ENCODE measurements at regions of chr1 and their contacts with region 1.

Region 1: GRCh38 chr1:21478974-21479373 is 30.2 kb upstream of the ALPL start:
- DNase-seq: no peak
- H3K4me3 ChIP-seq: no peak overlapping the region
- H3K27ac ChIP-seq: no peak overlapping the region
- H3K4me1 ChIP-seq: no peaks in the 10 kb centered on the region
- H3K27me3 ChIP-seq: no peaks in the 10 kb centered on the region
- CTCF ChIP-seq: no peak

Region 2: DNA sequence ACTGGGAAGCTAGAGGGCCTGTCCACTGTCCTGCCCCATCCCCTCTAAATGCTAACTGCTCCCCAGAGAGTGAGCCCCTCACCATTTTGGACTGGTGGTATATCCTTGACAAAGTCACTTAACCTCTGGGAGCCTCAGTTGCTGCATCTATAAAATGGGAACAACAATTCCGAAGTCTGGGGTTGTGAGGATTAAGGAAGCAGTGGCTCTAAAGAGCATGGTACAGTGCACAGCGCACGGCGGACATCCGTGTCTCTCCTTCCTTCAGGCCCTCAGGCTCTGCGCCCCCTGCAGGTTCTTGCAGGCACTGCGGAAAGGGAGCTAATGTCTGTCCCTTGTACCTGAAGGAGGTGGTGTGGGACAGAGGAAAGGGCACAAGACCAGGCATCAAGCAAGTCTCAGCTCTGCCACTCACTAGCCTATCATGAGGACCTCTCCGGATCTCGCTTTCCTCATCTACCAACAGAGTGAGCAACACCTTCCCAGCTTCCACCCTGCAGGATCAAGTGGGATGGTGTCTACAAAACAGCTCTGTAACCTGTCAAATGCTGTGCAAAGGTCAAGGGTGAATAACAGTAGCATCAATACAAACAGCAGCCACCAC is 208.8 kb before region 1 on chr1:
- CTCF ChIA-PET with region 1: no interaction called
- POLR2A ChIA-PET with region 1: no interaction called
- intact Hi-C with region 1: no loop called
- DNase-seq: peak; percentile 75
- H3K4me3 ChIP-seq: no peak overlapping the region
- H3K27ac ChIP-seq: no peak overlapping the region
- H3K4me1 ChIP-seq: no peaks in the 10 kb centered on the region
- H3K27me3 ChIP-seq: no peaks in the 10 kb centered on the region
- CTCF ChIP-seq: peak; percentile 98

Region 3: DNA sequence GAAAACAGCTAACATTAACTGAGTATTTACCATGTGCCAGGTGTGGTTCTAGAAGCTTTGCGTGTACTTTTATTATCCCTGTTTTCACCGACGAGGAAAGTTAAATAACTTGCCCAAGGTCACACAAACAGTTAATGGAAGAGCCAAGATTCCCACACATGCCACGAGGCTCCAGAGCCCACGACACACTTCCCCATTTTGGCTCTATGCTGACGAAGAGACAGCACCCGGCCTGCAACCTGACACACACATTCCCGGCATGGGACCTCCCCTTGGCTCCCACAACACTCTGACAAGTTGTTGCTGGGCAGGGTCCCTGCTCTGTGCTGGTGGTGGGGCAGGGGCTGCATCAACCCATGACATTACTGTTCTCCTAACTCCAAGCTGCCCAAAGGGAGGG is 137.4 kb after region 1 on chr1:
- CTCF ChIA-PET with region 1: no interaction called
- POLR2A ChIA-PET with region 1: interaction called, 11 read pairs
- intact Hi-C with region 1: no loop called
- DNase-seq: no peak
- H3K4me3 ChIP-seq: no peak overlapping the region
- H3K27ac ChIP-seq: no peak overlapping the region
- H3K4me1 ChIP-seq: peaks cover 27% of the 10 kb centered on the region
- H3K27me3 ChIP-seq: no peaks in the 10 kb centered on the region
- CTCF ChIP-seq: no peak